Psoas muscle (tissue), 8 donors: ENCODE measurements at regions of chr3 and their contacts with region 1.

Region 1: DNA sequence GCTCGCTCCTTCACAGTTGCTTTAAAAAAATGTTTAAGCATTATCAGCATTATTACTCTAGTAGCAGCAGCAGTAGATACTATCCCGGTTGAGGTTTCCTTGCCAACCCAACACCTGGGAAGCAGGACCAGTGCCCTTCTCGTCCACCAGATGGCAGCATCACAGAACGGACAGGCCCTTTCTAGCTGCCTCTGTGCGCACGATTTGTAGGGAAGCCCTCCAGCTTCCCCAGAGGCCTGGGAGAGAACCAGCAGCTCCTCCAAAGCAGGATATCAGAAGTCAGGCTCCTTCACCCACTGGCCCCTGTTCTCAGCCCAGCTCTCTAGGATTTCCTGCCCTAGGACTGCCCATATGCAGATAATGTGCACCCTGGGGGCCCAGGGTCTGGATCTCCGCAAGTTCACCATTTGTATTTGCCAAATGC is 16.8 kb upstream of the ESYT3 start:
- DNase-seq: peak; percentile 72 to 89
- ATAC-seq: peak; percentile 89 to 95 (median 91)
- H3K4me3 ChIP-seq: no peak overlapping the region
- H3K27ac ChIP-seq: no peak overlapping the region
- H3K4me1 ChIP-seq: peaks cover 6% of the 10 kb centered on the region
- H3K27me3 ChIP-seq: no peaks in the 10 kb centered on the region
- CTCF ChIP-seq: peak; percentile 88

Region 2: DNA sequence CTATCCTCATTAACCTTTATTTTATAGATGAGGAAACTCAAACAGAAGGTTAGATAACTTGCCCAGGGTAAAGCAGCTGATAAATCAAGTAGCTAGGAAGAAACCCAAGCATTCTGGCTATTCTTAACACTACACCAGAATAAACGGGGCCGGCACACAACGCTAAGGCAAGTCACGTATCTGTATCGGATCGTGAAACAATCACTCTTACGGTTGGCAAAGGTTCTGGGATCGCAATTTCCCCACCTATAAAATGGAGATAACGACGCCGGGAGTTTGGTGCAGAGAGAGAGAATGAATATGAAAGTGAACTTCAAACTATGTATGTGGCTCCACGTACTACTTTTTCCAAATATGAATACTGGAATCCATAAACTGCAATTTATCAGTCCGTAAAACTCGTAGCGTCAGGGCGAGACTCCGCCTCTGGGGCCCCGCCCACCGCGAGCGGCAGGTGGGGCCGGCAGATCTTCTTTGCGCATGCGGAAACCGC is 230.7 kb before region 1 on chr3:
- intact Hi-C with region 1: loop called in 1 of 2 experiments (anchors 10 kb)
- DNase-seq: peak; percentile 89 to 96
- ATAC-seq: peak; percentile 29 to 94 (median 63)
- H3K4me3 ChIP-seq: peak overlapping the region; percentile 97
- H3K27ac ChIP-seq: peak overlapping the region; percentile 98
- H3K4me1 ChIP-seq: peaks cover 35% of the 10 kb centered on the region
- H3K27me3 ChIP-seq: no peaks in the 10 kb centered on the region
- CTCF ChIP-seq: no peak

Region 3: GRCh38 chr3:138694287-138695007 is 276.9 kb after region 1 on chr3:
- intact Hi-C with region 1: no loop called
- DNase-seq: no peak
- ATAC-seq: no peak
- H3K4me3 ChIP-seq: no peak overlapping the region
- H3K27ac ChIP-seq: no peak overlapping the region
- H3K4me1 ChIP-seq: no peaks in the 10 kb centered on the region
- H3K27me3 ChIP-seq: no peaks in the 10 kb centered on the region
- CTCF ChIP-seq: no peak

Region 4: DNA sequence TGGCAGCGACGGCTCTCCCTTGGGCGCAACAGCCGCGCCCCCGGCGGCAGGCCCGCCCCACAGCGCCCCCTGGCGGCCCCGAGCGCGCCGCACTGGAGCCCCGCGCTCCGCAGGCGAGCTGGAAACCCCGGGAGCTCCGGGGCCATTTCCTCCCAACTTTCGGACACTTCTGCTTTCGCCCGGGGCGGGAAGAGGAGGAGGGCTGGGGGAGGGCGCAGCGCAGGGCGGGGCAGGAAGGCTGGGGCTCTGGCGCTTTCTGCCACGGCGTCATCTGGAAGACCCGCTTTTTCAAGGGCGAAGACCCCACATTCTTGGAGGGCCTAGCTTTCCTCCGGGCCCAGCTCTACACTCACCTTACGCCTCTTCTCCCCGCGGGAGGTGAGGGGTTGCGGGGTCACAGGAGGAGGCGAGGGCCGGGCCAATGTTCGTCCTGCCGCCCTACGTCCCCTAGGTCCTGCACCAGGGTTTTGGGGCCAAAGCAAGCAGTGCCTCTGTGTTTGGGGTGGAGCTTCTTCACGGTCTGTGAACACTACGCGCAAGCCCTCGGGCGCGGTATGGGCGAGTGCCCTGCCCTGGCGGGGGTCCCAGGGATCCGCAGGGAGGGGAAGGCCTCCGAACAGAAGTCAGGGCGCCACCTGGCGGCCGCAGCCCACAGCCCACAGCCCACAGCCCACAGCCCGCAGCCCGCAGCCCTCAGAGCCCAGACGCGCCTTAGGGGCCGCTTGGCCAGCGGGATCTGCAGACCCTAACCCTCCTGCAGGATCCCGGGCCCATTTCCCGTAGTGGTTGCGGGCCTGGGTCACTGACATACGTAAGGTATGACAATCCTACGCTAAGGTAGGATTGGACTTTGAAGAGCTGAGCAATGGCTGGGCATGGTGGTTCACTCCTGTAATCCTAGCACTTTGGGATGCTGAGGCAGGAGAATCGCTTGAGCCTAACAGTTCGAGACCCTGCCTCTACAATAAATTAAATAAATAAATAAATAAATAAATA is 498.2 kb after region 1 on chr3:
- intact Hi-C with region 1: loop called (anchors 2 to 10 kb)
- DNase-seq: peak; percentile 95 to 98
- ATAC-seq: peak; percentile 96 to 98 (median 97)
- H3K4me3 ChIP-seq: peak overlapping the region; percentile 81
- H3K27ac ChIP-seq: peak overlapping the region; percentile 94
- H3K4me1 ChIP-seq: no peaks in the 10 kb centered on the region
- H3K27me3 ChIP-seq: no peaks in the 10 kb centered on the region
- CTCF ChIP-seq: peak; percentile 98

Region 5: DNA sequence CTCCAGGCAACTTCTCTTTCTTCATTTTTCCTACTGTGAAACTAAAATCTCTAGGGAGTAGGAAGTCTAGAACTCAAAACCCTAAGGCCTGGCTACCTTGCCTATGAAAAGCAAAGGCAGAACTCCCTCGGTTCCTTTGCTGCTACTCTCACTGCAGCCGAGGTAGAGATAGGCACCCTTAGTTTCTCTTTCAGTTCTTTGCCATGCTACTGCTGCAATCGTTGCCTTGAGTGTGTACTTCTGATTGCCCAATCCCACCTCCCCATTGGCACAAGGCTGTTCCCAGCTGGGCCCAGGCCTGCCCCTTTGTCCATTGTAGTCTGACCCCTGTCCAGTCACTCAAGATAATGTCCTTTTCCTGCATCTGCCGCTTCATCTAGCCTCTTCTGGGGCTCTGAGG is 834.0 kb after region 1 on chr3:
- intact Hi-C with region 1: no loop called
- DNase-seq: no peak
- ATAC-seq: no peak
- H3K4me3 ChIP-seq: no peak overlapping the region
- H3K27ac ChIP-seq: no peak overlapping the region
- H3K4me1 ChIP-seq: no peaks in the 10 kb centered on the region
- H3K27me3 ChIP-seq: peaks cover 0 to 2% (median 0%) of the 10 kb centered on the region in 3 donors
- CTCF ChIP-seq: no peak